Activated T-helper 2 cell treated with anti-CD3 and anti-CD28 coated beads, Interferon-gamma antibody, Interleukin-2, Interleukin-4, amounts not matched to agents 10 μg/mL and 5 μg/mL and 100 μg/mL, durations not matched to agents 14 hours and 24 hours and 36 hours (primary cell): ENCODE measurements at regions of chr15 and their contacts with region 1.

Region 1: DNA sequence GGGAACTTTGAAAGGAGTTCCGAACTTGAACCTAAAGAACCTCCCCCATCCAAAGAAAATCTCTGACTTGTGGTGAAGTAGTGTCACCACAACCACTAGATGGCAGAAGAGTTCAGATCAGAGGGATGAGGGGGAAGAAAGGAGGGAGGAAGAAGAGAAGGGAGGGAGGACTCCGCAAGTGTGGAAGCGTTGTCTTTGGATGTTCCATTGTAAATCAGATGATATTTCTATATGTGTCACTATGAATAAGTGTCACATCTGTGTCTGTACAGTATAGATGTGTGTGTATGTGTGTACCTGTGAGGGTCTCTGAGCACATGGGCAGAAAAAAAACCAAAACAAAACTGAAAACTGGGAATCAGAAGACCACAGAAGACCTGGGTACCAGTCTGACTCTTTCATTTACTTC is 16.9 kb downstream of the SLC24A1 start:
- DNase-seq: peak; percentile 31
- H3K4me3 Mint-ChIP-seq: no peak overlapping the region
- H3K27ac Mint-ChIP-seq: no peak overlapping the region
- H3K4me1 Mint-ChIP-seq: peaks cover 9% of the 10 kb centered on the region
- H3K27me3 Mint-ChIP-seq: no peaks in the 10 kb centered on the region

Region 2: DNA sequence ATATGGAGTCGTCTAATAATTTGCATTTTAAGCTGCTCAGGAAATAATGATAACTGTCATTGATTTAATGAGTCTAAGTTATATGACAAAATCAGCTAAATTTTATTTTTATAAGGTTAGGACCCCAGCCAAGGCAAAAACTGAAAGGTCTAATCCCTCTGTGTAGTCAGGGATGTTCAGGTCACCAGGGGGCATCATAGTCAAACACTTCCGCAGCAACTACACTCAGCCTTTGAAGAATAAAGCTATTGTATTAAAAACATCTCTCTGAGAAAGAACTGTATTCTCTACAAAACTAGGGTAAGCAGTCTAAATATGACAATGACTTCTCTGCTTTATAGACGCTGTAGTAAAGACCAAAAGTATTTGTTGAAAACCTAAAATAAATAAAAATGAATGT is 42.7 kb before region 1 on chr15:
- intact Hi-C with region 1: no loop called
- DNase-seq: no peak
- H3K4me3 Mint-ChIP-seq: no peak overlapping the region
- H3K27ac Mint-ChIP-seq: no peak overlapping the region
- H3K4me1 Mint-ChIP-seq: peaks cover 5% of the 10 kb centered on the region
- H3K27me3 Mint-ChIP-seq: no peaks in the 10 kb centered on the region

Region 3: GRCh38 chr15:65856821-65857455 is 218.3 kb after region 1 on chr15:
- intact Hi-C with region 1: loop called (anchors 1 kb)
- DNase-seq: peak; percentile 68
- H3K4me3 Mint-ChIP-seq: no peak overlapping the region
- H3K27ac Mint-ChIP-seq: no peak overlapping the region
- H3K4me1 Mint-ChIP-seq: peaks cover 7% of the 10 kb centered on the region
- H3K27me3 Mint-ChIP-seq: peaks cover 8% of the 10 kb centered on the region